Posterior vena cava (tissue), 2 donors: ENCODE measurements at regions of chr6 and their contacts with region 1.

Region 1: GRCh38 chr6:129186988-129187387 is 304.1 kb downstream of the LAMA2 start:
- DNase-seq: no peak

Region 2: GRCh38 chr6:128952902-128953301 is 234.1 kb before region 1 on chr6:
- intact Hi-C with region 1: no loop called
- DNase-seq: no peak

Region 3: DNA sequence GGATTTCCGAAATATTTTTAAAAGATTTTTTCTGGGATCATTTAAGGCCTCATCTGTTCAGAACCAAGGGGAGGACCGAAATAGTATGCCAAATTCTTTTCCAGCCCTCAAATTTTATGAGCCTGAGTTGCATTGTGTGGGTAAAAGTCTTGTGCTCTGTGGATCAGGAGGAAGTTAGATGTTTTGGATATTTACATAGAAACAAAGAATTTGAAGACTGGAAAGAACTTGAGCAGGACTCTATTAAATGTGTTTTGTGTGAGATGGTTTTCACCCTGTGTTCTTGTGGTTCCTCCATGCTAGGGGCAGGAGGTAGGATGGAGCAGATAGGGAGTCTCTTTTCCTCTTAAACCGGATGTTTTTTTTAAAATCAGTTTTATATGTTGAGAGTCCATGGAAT is 25.1 kb after region 1 on chr6:
- intact Hi-C with region 1: loop called in 1 of 2 experiments (anchors 1 kb)
- DNase-seq: no peak